H1 (cell line): ENCODE measurements at regions of chr7 and their contacts with region 1.

Region 1: DNA sequence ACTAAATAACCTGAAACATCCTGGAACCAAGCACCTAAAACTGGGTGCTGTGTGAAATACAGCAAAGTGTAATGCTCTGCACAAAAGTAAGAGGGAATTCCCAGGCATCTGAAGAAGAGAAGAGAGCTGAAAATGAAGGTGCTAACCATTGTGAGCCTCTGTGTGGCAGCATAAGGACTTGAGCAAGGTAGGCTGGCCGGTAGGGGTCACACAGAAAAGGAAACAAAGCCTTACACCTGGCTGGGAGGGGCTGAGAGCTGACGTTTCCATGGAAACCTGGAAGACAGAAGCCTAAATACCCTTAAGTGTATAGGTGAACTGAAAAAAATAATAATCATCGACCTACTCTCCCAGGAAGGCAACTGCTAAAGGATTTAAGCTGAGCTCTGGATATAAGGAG is 48.6 kb downstream of the CUL1 start:
- DNase-seq: peak; percentile 68 to 79
- H3K4me3 ChIP-seq: no peak overlapping the region
- H3K27ac ChIP-seq: no peak overlapping the region
- H3K4me1 ChIP-seq: peaks cover 5 to 10% (median 8%) of the 10 kb centered on the region in 4 experiments; a peak in 6 of 7 replicates
- H3K27me3 ChIP-seq: no peaks in the 10 kb centered on the region
- CTCF ChIP-seq: peak; percentile 45 to 95 (median 83)
- EP300 ChIP-seq: no peak
- POLR2A ChIP-seq: no peak
- RAD21 ChIP-seq: peak; percentile 57 to 63

Region 2: DNA sequence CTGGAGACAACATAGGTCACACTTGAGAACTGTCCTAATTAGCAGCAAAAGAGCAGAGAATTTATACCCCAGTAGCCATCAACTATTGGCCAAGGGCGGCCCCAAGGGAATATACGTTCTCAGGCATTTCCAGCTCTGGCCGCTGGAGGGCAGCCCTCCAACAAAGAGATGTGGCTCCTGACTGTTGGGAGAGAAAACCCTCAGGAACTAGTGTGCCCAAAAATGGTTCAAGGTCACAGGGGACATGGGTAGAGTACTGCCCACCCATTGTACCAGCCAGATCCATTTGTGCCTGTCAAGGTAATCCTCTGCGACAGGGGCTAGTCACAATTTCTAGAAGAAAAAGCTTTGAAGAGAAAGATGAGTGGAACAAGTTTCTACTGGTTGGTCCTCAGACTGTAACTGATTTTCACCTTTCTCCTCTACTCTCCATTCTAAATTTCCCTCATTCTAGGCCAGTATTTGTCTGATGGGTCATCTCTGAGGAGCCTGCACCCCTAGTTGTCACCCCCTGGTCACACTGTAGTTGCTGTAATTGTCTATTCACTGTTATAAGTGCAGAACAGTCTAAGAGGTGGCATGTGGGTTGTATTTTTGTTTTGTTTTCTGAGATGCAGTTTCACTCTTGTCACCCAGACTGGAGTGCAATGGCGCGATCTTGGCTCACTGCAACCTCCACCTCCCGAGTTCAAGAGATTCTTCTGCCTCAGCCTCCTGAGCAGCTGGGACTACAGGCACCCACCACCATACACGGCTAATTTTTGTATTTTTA is 171.4 kb before region 1 on chr7:
- CTCF ChIA-PET with region 1: interaction called, 10 read pairs
- POLR2A ChIA-PET with region 1: no interaction called
- DNase-seq: peak in 1 of 2 experiments; percentile 89
- H3K4me3 ChIP-seq: no peak overlapping the region
- H3K27ac ChIP-seq: no peak overlapping the region
- H3K4me1 ChIP-seq: no peaks in the 10 kb centered on the region
- H3K27me3 ChIP-seq: no peaks in the 10 kb centered on the region
- CTCF ChIP-seq: peak; percentile 76 to 88 (median 88)
- EP300 ChIP-seq: no peak
- POLR2A ChIP-seq: no peak
- RAD21 ChIP-seq: peak; percentile 86 to 91

Region 3: GRCh38 chr7:148698397-148699023 is 48.8 kb before region 1 on chr7 and contains the start of gene CUL1:
- CTCF ChIA-PET with region 1: interaction called, 8 read pairs
- POLR2A ChIA-PET with region 1: interaction called, 21 read pairs
- DNase-seq: peak; percentile 29 to 82
- H3K4me3 ChIP-seq: peak within 1 kb of the TSS; percentile 80 to 89 (median 82)
- H3K27ac ChIP-seq: peak within 1 kb of the TSS; percentile 94
- H3K4me1 ChIP-seq: peaks cover 2 to 20% (median 11%) of the 10 kb centered on the region in 4 experiments; a peak in 6 of 7 replicates
- H3K27me3 ChIP-seq: no peaks in the 10 kb centered on the region
- CTCF ChIP-seq: no peak
- EP300 ChIP-seq: no peak
- POLR2A ChIP-seq: peak in 1 of 2 experiments; percentile 87; a peak in 1 of 3 replicates
- RAD21 ChIP-seq: no peak
- total RNA-seq, gene CUL1: 76.1 and 77.3 TPM in 2 replicates

Region 4: GRCh38 chr7:148722340-148723165 is 24.7 kb before region 1 on chr7:
- CTCF ChIA-PET with region 1: interaction called, 32 read pairs
- POLR2A ChIA-PET with region 1: interaction called, 3 read pairs
- DNase-seq: no peak
- H3K4me3 ChIP-seq: no peak overlapping the region
- H3K27ac ChIP-seq: no peak overlapping the region
- H3K4me1 ChIP-seq: peaks cover 0 to 13% (median 9%) of the 10 kb centered on the region in 4 experiments; a peak in 2 of 7 replicates
- H3K27me3 ChIP-seq: no peaks in the 10 kb centered on the region
- CTCF ChIP-seq: no peak
- EP300 ChIP-seq: no peak
- POLR2A ChIP-seq: no peak
- RAD21 ChIP-seq: no peak

Region 5: DNA sequence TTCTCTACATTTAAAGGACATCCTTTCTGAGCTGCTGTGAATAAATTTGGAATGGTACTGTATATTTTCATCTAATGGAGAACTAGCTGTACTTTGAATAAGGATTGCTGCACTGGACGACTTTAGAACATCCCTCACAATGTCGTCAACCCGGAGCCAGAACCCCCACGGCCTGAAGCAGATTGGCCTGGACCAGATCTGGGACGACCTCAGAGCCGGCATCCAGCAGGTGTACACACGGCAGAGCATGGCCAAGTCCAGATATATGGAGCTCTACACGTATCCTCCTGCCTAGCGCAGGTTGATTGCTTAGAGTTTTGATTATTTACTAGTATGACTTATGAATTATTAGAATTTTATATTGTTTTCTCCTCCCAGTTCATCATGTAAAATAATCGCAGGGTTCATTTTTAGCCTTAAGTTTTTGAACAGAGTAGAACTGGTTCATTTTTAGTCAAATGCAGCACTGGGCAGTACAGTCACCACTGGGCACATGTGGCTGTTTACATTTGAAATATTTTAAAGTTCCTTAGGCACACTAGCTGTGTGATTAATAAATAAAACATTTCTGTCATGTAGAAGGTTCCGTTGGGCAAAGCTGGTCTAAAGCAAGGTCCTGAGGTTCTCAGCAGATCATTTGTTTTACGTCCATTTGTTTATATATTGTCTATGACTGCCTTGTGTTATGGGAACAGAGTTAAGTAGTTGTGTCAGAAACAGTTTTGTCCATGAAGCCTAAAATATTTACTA is 17.1 kb before region 1 on chr7:
- CTCF ChIA-PET with region 1: interaction called, 26 read pairs
- POLR2A ChIA-PET with region 1: interaction called, 3 read pairs
- DNase-seq: no peak
- H3K4me3 ChIP-seq: no peak overlapping the region
- H3K27ac ChIP-seq: no peak overlapping the region
- H3K4me1 ChIP-seq: peaks cover 0 to 4% (median 0%) of the 10 kb centered on the region in 4 experiments; a peak in 1 of 7 replicates
- H3K27me3 ChIP-seq: no peaks in the 10 kb centered on the region
- CTCF ChIP-seq: no peak
- EP300 ChIP-seq: no peak
- POLR2A ChIP-seq: no peak
- RAD21 ChIP-seq: no peak

Region 6: GRCh38 chr7:148763622-148764021 is 16.3 kb after region 1 on chr7:
- CTCF ChIA-PET with region 1: interaction called, 35 read pairs
- POLR2A ChIA-PET with region 1: interaction called, 3 read pairs
- DNase-seq: no peak
- H3K4me3 ChIP-seq: no peak overlapping the region
- H3K27ac ChIP-seq: no peak overlapping the region
- H3K4me1 ChIP-seq: no peaks in the 10 kb centered on the region
- H3K27me3 ChIP-seq: no peaks in the 10 kb centered on the region
- CTCF ChIP-seq: no peak
- EP300 ChIP-seq: no peak
- POLR2A ChIP-seq: no peak
- RAD21 ChIP-seq: no peak

Region 7: DNA sequence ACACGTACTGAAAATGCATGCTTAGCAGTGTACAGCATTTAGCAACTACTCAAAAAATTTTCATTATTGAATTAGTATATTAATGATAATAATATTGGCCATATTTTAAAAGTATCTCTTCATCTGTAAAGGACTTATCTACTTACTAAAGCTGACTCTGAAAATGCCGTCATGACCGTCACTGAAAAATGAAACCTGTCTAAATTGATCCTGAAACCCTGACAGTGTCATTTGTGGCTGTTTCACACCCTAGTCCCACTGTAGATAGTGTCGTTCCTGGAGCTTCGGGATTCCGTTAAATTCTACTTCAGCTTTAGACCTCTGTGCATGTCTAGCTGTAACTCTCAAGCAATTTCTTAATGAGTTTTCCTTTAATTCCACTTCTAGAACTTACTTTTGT is 172.6 kb after region 1 on chr7:
- CTCF ChIA-PET with region 1: no interaction called
- POLR2A ChIA-PET with region 1: no interaction called
- DNase-seq: no peak
- H3K4me3 ChIP-seq: no peak overlapping the region
- H3K27ac ChIP-seq: no peak overlapping the region
- H3K4me1 ChIP-seq: peaks cover 0 to 2% (median 0%) of the 10 kb centered on the region in 4 experiments; a peak in 1 of 7 replicates
- H3K27me3 ChIP-seq: no peaks in the 10 kb centered on the region
- CTCF ChIP-seq: no peak
- EP300 ChIP-seq: no peak
- POLR2A ChIP-seq: no peak
- RAD21 ChIP-seq: no peak

Region 8: GRCh38 chr7:148962823-148963582 is 215.7 kb after region 1 on chr7:
- CTCF ChIA-PET with region 1: interaction called, 11 read pairs
- POLR2A ChIA-PET with region 1: no interaction called
- DNase-seq: no peak
- H3K4me3 ChIP-seq: peak overlapping the region; percentile 8 to 65 (median 39); a peak in 6 of 8 replicates
- H3K27ac ChIP-seq: no peak overlapping the region
- H3K4me1 ChIP-seq: peaks cover 0 to 4% (median 3%) of the 10 kb centered on the region in 4 experiments; a peak in 3 of 7 replicates
- H3K27me3 ChIP-seq: no peaks in the 10 kb centered on the region
- CTCF ChIP-seq: peak; percentile 68 to 84 (median 74)
- EP300 ChIP-seq: no peak
- POLR2A ChIP-seq: no peak
- RAD21 ChIP-seq: peak; percentile 93 to 96